ENCODE measurements at regions of chr22 and their contacts with region 1.

Region 1: GRCh38 chr22:28855355-28856094 is 27.8 kb upstream of the ZNRF3 start:
- DNase-seq: peak; percentile 37 to 79 (median 64)
- H3K4me3 ChIP-seq: no peak overlapping the region
- H3K27ac ChIP-seq: no peak overlapping the region
- H3K4me1 ChIP-seq: peaks cover 0 to 7% of the 10 kb centered on the region in 2 donors
- H3K27me3 ChIP-seq: no peaks in the 10 kb centered on the region
- CTCF ChIP-seq: peak; percentile 84 to 97 (median 94)
- POLR2A ChIP-seq: no peak

Region 2: DNA sequence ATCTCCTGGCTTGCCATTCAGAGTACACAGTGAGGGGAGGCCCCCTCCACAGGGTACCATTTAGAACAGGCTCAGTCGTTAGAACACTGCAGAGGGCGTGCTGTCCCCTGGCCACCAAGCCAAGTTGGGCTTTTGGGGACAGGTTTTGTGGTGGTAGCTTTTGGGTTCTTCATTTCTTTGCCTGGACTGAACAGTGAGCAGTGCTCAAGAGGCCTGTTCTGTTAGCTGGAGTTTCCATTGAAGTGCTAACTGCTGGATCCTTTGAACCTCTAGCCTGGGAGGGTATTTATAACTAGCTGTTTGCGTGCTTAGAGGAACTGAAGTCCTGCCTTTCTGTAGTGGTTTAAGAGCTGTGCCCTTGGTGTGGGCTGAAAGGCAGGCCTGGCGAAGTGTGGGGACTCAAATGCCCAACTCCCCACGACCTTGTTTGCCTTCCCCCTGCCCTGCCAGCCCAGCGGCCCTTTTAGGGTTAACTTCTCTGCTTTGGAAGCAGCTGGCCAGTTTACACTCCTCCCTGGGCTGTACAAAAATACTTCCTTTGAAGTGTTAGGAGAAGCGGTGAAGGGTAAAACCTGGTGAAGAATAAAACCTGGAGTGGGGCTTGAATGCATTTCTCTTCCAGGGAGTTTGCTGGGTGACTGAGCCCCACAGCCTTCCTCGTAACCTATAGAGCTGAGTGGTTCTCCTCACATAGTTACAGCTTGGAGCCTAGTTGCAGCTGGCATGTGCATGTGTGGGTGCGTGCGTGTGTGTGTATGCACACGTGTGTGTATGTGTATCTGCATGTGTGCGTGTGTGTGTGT is 62.4 kb after region 1 on chr22:
- intact Hi-C with region 1: no loop called
- DNase-seq: peak in 4 of 7 donors; percentile 28 to 60 (median 44)
- H3K4me3 ChIP-seq: no peak overlapping the region
- H3K27ac ChIP-seq: peak overlapping the region in 4 of 5 donors; percentile 3 to 79 (median 51)
- H3K4me1 ChIP-seq: peaks cover 26 to 31% of the 10 kb centered on the region in 2 donors
- H3K27me3 ChIP-seq: no peaks in the 10 kb centered on the region
- CTCF ChIP-seq: no peak
- POLR2A ChIP-seq: no peak

Region 3: DNA sequence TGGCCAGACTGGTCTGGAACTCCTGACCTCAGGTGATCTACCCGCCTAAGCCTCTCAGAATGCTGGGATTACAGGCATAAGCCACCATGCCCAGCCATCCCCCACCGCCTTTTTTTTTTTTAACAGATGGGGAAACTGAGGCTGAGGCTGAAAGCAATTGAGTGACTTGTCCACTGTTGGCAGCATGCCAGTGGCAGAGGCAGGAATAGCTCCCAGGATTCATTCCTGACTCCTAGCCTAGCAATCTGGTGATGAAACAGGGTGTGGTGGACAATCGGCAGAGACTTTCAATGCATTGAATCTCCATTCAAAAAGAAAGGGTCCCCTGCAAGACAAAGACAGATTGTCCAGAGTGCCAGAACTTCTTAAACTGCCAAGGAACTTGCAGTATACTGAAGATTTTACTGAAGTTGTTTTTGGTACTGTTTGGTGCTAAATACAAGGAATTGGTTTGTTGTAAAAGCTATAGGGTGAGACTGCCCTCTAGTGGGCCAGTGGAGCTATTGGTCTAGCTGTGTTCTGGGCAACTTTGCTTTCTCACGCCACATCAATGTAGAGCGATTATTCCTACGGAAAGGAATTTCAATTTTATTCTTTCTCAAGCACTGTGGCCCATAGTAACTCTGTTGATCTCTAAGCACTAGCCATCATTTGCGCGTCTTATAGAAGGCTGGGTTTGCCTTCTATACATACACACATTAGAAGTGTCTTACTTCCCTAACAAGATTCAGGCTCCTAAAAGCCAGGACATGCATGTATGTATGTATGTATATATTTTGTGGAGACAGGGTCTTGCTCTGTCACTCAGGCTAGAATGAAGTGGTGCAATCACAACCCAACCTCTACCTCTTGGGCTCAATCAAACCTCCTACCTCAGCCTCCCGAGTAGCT is 185.1 kb after region 1 on chr22:
- intact Hi-C with region 1: loop called (anchors 5 kb)
- DNase-seq: peak; percentile 75 to 91 (median 79)
- H3K4me3 ChIP-seq: no peak overlapping the region
- H3K27ac ChIP-seq: peak overlapping the region in 2 of 5 donors; percentile 22 to 48
- H3K4me1 ChIP-seq: peaks cover 25 to 58% of the 10 kb centered on the region in 2 donors
- H3K27me3 ChIP-seq: no peaks in the 10 kb centered on the region
- CTCF ChIP-seq: peak; percentile 91 to 98 (median 96)
- POLR2A ChIP-seq: no peak

Region 4: GRCh38 chr22:29154364-29155048 is 299.0 kb after region 1 on chr22:
- intact Hi-C with region 1: loop called (anchors 10 kb)
- DNase-seq: peak; percentile 70 to 88 (median 81)
- H3K4me3 ChIP-seq: peak overlapping the region in 2 of 4 donors; percentile 11 to 45
- H3K27ac ChIP-seq: no peak overlapping the region
- H3K4me1 ChIP-seq: peaks cover 40 to 43% of the 10 kb centered on the region in 2 donors
- H3K27me3 ChIP-seq: no peaks in the 10 kb centered on the region
- CTCF ChIP-seq: peak; percentile 83 to 98 (median 95)
- POLR2A ChIP-seq: no peak

Region 5: DNA sequence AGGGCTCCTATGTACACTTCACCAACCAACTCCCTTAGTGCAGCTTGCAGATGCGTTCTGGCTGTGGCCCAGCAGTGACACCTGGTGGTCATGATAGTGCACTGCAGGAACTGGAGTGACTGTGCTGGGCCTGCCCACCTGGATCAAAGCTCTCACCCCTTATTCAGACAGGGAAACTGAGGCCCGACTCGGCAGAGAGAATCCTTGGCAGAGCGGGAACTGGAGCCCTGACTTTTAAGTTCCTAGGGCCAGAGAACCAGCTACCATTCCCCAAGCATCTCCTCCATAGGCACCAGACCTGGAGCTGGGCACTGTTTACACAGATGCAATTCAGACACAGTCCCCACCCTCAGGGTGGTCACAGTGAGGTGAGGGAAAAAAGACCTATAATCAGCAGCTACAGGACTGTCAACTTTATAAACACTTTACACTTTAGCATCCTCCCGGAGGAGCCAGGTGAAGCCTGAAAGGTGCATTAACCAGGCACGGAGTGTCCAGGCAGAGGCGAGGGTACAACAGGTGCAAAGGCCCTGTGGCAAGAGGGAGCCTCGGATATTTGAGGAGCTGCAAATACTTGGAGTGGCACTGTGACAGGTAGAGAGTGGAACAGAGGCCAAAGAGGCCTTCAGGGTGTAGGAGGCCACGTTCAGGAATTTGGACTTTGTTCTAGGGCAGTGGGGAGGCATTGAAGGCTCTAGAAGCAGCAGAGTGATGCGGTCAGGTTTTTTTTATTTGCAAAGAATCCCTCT is 390.3 kb after region 1 on chr22:
- intact Hi-C with region 1: loop called in 1 of 2 experiments (anchors 5 kb)
- DNase-seq: peak; percentile 66 to 92 (median 78)
- H3K4me3 ChIP-seq: no peak overlapping the region
- H3K27ac ChIP-seq: no peak overlapping the region
- H3K4me1 ChIP-seq: no peaks in the 10 kb centered on the region
- H3K27me3 ChIP-seq: no peaks in the 10 kb centered on the region
- CTCF ChIP-seq: peak; percentile 93 to 98 (median 96)
- POLR2A ChIP-seq: no peak

Measured in adrenal gland (tissue), 19 donors.